ENCODE measurements at regions of chr2 and their contacts with region 1.

Region 1: DNA sequence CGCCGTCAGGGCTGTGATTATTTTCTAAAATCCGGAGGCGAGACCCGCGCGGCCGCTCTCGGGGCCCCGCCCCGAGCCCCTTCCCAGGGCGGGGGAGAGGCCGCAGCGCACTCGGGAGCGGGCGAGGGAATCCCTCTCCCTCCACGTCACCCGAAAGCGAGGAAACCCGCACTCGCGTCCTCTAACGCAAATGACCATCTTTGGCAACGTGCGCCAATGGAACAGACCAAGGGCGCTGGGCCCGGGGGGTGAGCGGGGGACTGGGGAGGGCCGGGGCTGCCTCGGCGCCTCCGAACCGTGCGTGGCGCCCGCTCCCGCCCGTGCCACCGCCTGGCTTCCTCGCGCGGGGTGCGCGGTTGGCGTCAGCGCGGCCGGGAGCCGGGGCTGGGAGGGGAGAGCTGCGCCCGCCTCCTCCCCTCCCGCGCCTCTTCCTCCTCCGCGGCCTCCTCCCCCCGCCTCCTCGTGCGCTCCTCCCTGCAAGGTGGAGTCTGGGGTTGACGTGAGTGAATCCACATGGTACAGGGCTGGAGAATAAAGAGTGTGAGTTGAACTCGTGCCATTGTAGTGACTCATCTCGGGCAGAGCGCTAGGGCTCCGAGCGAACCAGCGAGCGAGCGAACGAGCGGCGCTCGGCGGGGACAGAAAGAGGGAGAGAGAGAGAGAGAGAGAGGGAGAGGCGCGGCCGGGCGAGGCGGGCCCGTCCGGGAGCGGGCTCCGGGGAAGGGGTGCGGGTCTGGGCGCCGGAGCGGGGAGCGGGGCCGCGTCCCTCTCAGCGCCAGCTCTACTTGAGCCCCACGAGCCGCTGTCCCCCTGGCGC is at the start of gene FOSL2:
- DNase-seq: peak; percentile 97
- H3K4me3 Mint-ChIP-seq: peak within 1 kb of the TSS; percentile 94
- H3K27ac Mint-ChIP-seq: peak within 1 kb of the TSS; percentile 99
- H3K4me1 Mint-ChIP-seq: peaks cover 30% of the 10 kb centered on the region
- H3K27me3 Mint-ChIP-seq: no peaks in the 10 kb centered on the region
- total RNA-seq, gene FOSL2: 102 to 110 TPM

Region 2: DNA sequence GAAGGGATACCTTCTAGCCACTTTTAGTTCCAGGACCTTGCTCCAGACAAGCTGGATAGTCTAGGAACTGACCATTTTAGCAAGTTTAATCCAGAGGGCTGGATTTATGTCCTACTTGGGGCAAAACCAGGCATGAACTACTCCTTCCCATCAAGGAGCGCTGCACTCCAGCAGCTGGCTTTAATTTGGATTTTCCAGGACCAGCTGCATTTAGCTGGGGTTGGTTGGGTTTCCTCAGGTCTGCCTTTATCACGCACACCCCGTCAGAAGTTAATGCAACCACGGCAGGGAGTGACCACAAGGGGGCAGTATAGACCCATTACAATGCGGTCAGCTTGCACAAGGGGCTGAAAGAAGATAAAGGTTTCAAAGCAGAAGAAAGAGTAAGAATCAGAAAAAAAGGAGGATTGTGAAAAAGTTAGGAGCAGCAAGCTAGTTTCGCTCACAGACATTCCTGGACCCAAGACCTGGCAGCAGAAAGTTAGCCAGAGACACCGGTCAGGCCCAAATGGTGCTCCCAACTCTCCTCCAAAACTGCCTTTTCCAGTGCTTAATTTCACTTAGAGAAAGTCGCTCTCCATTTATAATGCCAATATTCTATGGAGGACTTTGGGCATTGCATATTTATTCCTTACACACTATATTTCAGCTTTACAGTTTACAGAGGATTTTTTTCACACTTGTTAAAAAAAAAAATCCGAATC is 688.7 kb before region 1 on chr2:
- CTCF ChIA-PET with region 1: no interaction called
- intact Hi-C with region 1: loop called (anchors 2 kb)
- DNase-seq: peak; percentile 95
- H3K4me3 Mint-ChIP-seq: no peak overlapping the region
- H3K27ac Mint-ChIP-seq: no peak overlapping the region
- H3K4me1 Mint-ChIP-seq: peaks cover 13% of the 10 kb centered on the region
- H3K27me3 Mint-ChIP-seq: no peaks in the 10 kb centered on the region

Region 3: GRCh38 chr2:27954771-27955383 is 437.6 kb before region 1 on chr2:
- CTCF ChIA-PET with region 1: no interaction called
- intact Hi-C with region 1: loop called (anchors 2 kb)
- DNase-seq: peak; percentile 68
- H3K4me3 Mint-ChIP-seq: no peak overlapping the region
- H3K27ac Mint-ChIP-seq: peak overlapping the region; percentile 68
- H3K4me1 Mint-ChIP-seq: peaks cover 65% of the 10 kb centered on the region
- H3K27me3 Mint-ChIP-seq: no peaks in the 10 kb centered on the region

Region 4: DNA sequence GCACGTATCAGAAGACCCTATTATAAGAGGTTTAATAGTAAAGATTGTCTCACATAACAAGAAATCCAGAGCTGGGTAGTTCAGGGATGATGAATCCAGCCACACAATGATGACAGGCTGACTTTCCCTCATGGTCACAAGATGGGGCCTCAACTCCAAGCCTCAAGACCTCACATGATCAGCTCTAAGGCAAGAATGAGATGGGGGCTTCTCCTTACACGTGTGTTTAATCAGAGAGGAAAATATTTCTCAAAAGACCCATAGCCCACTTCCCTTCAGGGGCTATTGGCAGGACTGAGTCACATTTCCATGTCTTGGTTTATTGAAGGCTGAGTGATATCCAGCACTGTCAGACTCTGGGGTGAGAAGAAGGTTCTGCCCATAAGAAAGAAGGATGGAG is 100.0 kb before region 1 on chr2:
- CTCF ChIA-PET with region 1: no interaction called
- intact Hi-C with region 1: loop called (anchors 5 kb)
- DNase-seq: no peak
- H3K4me3 Mint-ChIP-seq: no peak overlapping the region
- H3K27ac Mint-ChIP-seq: no peak overlapping the region
- H3K4me1 Mint-ChIP-seq: peaks cover 8% of the 10 kb centered on the region
- H3K27me3 Mint-ChIP-seq: no peaks in the 10 kb centered on the region

Region 5: DNA sequence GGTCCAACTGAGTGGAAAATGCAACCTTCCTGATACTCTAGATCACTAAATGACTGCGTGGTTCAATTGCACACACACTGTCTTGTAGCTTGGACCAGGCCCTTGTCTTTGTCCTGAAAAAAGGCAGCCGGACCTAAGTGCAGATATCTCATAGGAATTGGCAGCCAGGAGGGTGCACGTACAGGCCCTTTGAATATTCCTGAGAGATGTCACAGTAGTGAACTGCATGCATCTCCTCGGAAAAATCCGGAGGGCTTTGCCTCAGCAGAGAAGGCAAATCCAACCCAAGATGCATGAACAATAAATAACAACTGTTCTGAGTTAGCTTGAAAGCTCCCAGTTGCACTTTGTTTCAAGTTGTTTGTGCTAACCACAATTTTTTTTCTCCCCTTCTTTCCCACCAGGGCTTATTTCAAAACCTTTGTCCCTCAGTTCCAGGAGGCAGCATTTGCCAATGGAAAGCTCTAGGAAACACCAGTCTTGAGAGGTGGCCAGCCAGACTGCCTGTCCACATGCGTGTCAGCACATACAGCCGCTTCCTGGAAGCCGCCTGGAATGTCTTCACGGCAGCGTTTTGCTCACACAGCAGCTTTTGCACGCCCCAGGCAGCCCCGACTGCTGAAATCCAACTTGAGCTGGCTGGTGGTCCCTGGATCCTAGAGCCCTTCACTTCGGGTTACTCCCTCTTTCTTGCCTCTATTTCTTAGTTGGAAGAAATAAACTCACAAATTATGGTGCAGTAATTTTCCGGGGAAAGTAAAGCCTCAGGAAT is 54.3 kb before region 1 on chr2:
- CTCF ChIA-PET with region 1: no interaction called
- intact Hi-C with region 1: no loop called
- DNase-seq: no peak
- H3K4me3 Mint-ChIP-seq: no peak overlapping the region
- H3K27ac Mint-ChIP-seq: no peak overlapping the region
- H3K4me1 Mint-ChIP-seq: no peaks in the 10 kb centered on the region
- H3K27me3 Mint-ChIP-seq: no peaks in the 10 kb centered on the region

Region 6: DNA sequence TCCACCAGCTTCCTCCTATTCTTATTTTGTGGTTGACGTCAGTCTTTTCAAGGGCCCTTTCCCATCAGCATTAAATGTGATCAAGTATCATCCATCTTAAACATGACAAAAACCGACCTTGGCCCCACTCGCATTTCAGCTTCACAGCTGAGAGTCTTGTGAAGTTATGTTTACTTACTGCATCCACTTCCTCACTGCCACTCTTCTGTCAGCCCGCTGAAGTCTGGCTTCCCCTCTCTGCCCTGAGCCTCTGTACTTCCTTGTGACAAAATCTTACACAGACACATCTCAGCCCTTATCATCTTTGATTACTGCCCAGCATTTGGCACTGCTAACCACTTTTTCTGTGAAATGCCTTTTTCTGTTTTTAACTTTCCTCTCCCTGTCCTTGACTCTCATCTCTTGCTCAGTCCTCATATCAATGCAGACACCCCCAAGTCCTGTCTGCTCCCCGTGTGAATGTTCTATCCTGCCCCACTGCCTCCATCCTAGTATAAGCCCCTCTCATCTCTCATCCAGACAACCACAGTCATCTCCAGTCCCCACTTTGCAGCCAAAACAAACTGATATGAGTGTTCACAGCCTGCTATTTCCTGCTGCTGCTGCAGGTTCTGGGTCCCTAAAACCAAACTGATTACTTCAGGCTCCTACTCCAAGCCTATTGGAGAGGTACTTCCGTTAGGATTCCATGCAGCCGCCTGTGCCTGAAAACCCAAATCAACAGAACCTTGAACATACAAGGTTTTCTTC is 31.5 kb after region 1 on chr2:
- CTCF ChIA-PET with region 1: no interaction called
- intact Hi-C with region 1: loop called (anchors 1 kb)
- DNase-seq: peak; percentile 65
- H3K4me3 Mint-ChIP-seq: peak overlapping the region; percentile 9
- H3K27ac Mint-ChIP-seq: peak overlapping the region; percentile 82
- H3K4me1 Mint-ChIP-seq: peaks cover 37% of the 10 kb centered on the region
- H3K27me3 Mint-ChIP-seq: no peaks in the 10 kb centered on the region

Region 7: GRCh38 chr2:28566521-28567041 is 174.1 kb after region 1 on chr2:
- CTCF ChIA-PET with region 1: no interaction called
- intact Hi-C with region 1: no loop called
- DNase-seq: peak; percentile 93
- H3K4me3 Mint-ChIP-seq: peak overlapping the region; percentile 83
- H3K27ac Mint-ChIP-seq: peak overlapping the region; percentile 71
- H3K4me1 Mint-ChIP-seq: peaks cover 8% of the 10 kb centered on the region
- H3K27me3 Mint-ChIP-seq: no peaks in the 10 kb centered on the region

Region 8: GRCh38 chr2:28674062-28674712 is 281.7 kb after region 1 on chr2:
- CTCF ChIA-PET with region 1: no interaction called
- intact Hi-C with region 1: no loop called
- DNase-seq: no peak
- H3K4me3 Mint-ChIP-seq: no peak overlapping the region
- H3K27ac Mint-ChIP-seq: no peak overlapping the region
- H3K4me1 Mint-ChIP-seq: peaks cover 8% of the 10 kb centered on the region
- H3K27me3 Mint-ChIP-seq: no peaks in the 10 kb centered on the region

Region 9: GRCh38 chr2:28810384-28811285 is 418.1 kb after region 1 on chr2 and contains the start of gene SPDYA:
- CTCF ChIA-PET with region 1: no interaction called
- intact Hi-C with region 1: loop called (anchors 10 kb)
- DNase-seq: peak; percentile 82
- H3K4me3 Mint-ChIP-seq: peak within 1 kb of the TSS; percentile 75
- H3K27ac Mint-ChIP-seq: no peak within 1 kb of the TSS
- H3K4me1 Mint-ChIP-seq: peaks cover 11% of the 10 kb centered on the region
- H3K27me3 Mint-ChIP-seq: no peaks in the 10 kb centered on the region
- total RNA-seq, gene SPDYA: 1.8 to 2.0 TPM